ENCODE measurements at regions of chr2 and their contacts with region 1.

Region 1: DNA sequence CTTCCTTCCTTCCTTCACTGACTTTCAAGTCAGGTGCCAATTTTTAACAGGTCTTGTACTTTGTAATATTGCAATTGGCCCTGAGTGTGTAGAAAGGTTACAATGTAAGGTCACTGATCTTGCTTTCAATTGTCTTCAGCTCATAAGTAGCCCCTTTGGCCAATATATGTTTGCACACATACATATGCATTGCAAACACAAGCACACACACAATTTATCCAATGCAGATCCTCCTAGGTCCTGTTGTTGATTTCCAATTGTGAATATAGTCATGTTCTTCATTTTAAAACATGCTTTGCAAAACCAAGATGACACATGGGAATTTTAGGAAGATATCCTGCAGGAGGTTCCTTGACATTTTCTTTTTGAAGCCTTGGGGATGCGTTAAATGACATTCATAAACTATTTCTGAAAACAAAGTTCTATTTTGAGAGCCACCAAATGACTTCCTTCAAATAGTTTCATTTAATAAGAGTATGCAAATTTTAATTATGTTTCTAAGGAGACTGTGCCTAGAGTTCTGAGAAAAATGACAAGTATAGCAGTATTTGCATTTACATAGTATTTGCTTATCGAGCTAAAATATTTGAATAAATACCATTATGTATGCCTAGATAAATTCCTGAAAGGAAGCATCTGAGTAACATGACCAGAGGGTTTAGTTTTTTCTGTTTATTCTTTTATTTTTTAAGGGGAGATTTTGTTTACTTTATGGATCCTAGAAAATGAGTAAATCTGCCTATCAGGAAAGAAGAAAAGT is 117.1 kb upstream of the TMEFF2 start:
- DNase-seq: no peak
- H3K4me3 ChIP-seq: no peak overlapping the region
- H3K27ac ChIP-seq: no peak overlapping the region
- H3K27me3 ChIP-seq: no peaks in the 10 kb centered on the region
- CTCF ChIP-seq: no peak

Region 2: DNA sequence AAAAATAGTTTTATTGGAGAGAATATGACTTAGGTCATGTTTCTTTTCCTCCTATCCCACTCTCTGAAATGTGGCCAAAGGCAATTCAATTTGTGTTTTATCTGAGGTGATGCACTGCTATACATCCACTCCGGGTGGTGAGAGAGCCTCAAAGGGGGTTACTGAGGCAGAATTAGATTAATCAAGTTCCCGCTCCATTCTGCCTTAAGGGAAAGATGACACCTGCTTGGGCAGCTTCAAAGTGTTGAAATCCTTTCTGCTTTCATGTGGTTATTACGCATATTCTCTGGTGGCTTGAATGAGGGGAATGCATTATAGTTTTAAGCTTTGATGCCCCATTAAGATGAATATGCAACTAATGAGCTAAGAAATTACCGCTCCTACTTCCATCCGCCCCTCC is 95.8 kb after region 1 on chr2:
- CTCF ChIA-PET with region 1: no interaction called
- POLR2A ChIA-PET with region 1: interaction called, 12 read pairs
- DNase-seq: no peak
- H3K4me3 ChIP-seq: no peak overlapping the region
- H3K27ac ChIP-seq: no peak overlapping the region
- H3K27me3 ChIP-seq: no peaks in the 10 kb centered on the region
- CTCF ChIP-seq: no peak

Measured in AG04450 (cell line).